AG04449 (cell line): ENCODE measurements at regions of chr1 and their contacts with region 1.

Region 1: GRCh38 chr1:222455188-222455879 is 92.6 kb downstream of the HHIPL2 start:
- DNase-seq: peak; percentile 78
- H3K4me3 ChIP-seq: peak overlapping the region; percentile 48
- CTCF ChIP-seq: peak; percentile 92

Region 2: DNA sequence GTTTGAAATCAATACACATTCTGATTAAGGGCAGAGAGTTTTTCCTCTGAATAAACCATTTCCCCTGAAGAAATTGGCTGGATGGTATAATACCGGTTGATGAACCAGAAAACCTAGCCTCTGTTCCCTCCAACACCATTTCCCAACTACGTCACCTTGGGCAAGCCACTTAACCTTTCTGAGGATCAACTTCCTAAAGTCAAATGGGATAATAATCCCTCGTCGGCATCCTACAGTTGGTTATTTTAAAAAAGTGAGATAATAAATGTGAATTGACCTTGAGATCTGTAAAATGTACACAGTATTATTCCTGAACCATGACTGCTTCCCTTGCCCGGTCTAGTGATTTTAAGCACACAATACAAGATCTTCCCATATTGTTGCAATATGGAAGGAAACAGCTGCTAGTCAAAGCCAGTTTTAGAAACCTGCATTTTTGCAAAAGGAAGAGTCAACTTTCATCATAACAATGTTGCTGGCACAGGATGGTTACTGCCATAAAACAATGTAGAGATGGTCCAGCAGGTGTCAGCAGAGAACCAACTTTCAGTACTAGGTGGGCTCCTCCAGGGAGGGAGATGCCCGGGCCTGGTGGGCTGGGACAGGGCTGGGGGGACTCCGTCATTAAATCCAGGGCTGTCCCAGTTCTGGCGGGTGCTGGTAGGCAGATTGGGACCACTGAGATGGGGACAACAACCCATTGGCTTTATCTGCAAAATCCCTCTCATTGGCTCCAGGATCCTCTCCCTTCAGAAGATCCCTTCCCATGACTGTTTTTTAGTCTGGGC is 1581.3 kb before region 1 on chr1:
- CTCF ChIA-PET with region 1: interaction called, 21 read pairs
- POLR2A ChIA-PET with region 1: no interaction called
- DNase-seq: no peak
- H3K4me3 ChIP-seq: no peak overlapping the region
- CTCF ChIP-seq: peak; percentile 70

Region 3: DNA sequence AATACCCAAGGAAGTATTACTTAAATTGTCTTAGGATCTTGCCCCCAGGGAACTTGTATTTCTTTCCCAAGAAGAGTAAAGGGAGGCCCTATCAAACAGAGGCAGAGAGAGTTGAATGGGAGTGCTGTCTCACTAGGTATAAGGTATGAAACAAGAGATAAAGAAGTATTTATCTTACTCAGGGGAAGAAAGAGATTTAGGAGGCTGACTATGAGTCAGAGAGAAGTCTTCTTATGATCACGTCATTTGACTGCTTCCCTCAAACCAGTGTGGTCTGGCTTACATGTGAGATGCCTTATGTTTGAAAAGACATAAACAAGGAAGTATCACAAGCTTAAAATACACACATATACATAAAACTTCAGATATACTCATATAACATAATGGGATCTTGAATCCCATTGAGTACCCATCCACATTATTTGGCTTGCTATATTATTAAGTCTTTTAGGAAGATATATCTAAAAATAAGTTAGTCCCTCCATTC is 743.1 kb before region 1 on chr1:
- CTCF ChIA-PET with region 1: interaction called, 18 read pairs
- POLR2A ChIA-PET with region 1: no interaction called
- DNase-seq: peak; percentile 85
- H3K4me3 ChIP-seq: no peak overlapping the region
- CTCF ChIP-seq: no peak

Region 4: GRCh38 chr1:221907166-221907932 is 548.0 kb before region 1 on chr1:
- CTCF ChIA-PET with region 1: interaction called, 11 read pairs
- POLR2A ChIA-PET with region 1: no interaction called
- DNase-seq: no peak
- H3K4me3 ChIP-seq: no peak overlapping the region
- CTCF ChIP-seq: no peak

Region 5: DNA sequence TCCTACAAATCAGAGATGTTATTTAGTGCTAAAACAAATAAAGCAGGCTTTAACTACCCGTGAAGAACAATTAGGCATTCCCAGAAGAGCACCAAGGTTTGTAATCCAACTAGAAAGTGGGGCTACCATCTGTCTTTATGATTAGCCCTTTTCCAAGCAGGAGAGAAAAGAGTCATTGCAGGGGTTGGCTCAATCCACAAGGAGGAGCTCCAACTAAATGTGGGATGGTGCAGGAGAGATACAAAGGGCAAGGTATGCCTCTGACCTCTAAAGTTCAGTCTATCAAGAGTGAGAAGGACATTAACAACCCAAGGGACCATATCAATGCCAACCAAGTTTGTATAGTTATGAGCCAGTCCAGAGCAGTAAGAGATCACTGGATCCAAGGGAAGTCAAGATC is 330.7 kb before region 1 on chr1:
- CTCF ChIA-PET with region 1: interaction called, 17 read pairs
- POLR2A ChIA-PET with region 1: no interaction called
- DNase-seq: no peak
- H3K4me3 ChIP-seq: no peak overlapping the region
- CTCF ChIP-seq: peak; percentile 7

Region 6: GRCh38 chr1:222275729-222276465 is 179.4 kb before region 1 on chr1:
- CTCF ChIA-PET with region 1: interaction called, 10 read pairs
- POLR2A ChIA-PET with region 1: no interaction called
- DNase-seq: no peak
- H3K4me3 ChIP-seq: no peak overlapping the region
- CTCF ChIP-seq: no peak